Ascending aorta (tissue), 2 donors: ENCODE measurements at regions of chr19 and their contacts with region 1.

Region 1: DNA sequence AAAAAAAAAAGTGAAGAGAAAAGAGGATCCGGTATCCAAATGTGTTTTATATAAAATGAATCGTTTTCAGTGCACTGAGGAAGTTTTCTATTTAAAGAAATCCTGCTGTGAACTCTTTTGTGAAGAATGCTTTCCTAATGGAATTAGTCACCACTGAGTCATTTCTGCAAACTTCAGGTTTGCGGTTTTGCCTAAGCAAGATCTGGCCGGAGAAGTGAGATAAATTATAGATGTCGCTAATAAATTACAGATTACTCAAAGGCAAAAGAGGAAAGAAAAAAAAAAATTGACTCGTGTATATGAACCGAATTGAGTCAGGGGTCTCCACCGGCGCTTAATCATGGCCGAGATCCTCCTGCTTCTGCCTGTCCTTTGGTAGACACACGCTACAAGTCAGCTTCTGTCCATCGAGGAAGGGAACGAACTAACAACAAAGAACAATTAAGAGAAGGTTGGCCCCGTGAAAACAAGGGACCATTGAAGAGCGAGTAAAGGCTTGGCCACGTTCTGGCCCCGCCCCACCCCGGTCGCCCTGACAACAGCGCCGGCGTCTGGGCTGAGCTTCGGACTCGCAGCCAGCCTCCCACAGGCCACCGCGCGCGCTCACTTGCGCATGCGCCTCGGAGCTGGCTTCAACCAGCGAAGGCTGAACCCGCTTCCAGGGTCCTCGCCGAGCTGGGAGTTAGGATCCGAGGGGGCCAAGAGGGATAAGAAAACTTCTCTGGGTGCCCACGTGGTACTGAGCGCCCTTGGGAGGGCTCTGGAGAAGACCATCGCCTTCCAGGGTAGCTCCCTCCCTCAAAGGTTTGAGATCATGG is 33.0 kb upstream of the MRI1 start:
- DNase-seq: peak; percentile 65 to 96
- H3K4me3 ChIP-seq: peak overlapping the region; percentile 50 to 70
- H3K27ac ChIP-seq: peak overlapping the region; percentile 88 to 95
- H3K4me1 ChIP-seq: peaks cover 3 to 39% of the 10 kb centered on the region in 2 donors
- H3K27me3 ChIP-seq: no peaks in the 10 kb centered on the region
- CTCF ChIP-seq: no peak

Region 2: DNA sequence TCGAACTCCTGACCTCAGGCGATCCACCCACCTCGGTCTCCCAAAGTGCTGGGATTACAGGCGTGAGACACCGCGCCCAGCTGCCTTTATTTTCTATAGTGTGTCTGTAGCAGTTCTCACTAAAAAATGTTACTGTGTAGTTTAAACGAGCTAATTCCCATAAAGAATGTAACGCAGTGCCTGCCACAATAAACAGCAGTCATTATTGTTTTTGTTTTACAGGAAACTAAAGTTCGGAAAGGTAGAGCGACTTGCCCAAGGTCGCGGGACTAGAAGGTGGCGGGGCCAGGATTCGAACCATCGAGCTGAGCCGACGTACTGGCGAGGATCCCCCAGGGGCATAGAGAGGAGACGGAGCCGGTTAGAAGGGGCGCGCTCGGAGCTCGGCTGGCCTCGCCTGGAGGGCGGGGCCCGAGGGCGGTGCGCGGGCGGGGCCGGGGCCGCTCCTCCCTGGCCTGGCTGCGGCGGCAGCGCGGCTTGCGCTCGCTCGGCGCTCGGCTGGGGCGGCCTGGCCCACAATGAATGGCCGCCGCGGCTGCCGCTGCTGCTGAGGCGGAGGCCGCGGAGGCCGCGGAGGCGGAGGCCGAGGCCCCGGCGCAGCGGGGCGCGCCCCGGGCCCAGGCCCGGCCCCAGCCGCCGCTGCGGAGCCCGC is 613.5 kb before region 1 on chr19 and contains the start of gene NACC1:
- intact Hi-C with region 1: loop called (anchors 5 kb)
- DNase-seq: peak; percentile 56 to 94
- H3K4me3 ChIP-seq: peak within 1 kb of the TSS; percentile 94 to 100
- H3K27ac ChIP-seq: peak within 1 kb of the TSS; percentile 57 to 61
- H3K4me1 ChIP-seq: peaks cover 5 to 29% of the 10 kb centered on the region in 2 donors
- H3K27me3 ChIP-seq: no peaks in the 10 kb centered on the region
- CTCF ChIP-seq: no peak
- total RNA-seq, gene NACC1: 35.5 TPM

Region 3: DNA sequence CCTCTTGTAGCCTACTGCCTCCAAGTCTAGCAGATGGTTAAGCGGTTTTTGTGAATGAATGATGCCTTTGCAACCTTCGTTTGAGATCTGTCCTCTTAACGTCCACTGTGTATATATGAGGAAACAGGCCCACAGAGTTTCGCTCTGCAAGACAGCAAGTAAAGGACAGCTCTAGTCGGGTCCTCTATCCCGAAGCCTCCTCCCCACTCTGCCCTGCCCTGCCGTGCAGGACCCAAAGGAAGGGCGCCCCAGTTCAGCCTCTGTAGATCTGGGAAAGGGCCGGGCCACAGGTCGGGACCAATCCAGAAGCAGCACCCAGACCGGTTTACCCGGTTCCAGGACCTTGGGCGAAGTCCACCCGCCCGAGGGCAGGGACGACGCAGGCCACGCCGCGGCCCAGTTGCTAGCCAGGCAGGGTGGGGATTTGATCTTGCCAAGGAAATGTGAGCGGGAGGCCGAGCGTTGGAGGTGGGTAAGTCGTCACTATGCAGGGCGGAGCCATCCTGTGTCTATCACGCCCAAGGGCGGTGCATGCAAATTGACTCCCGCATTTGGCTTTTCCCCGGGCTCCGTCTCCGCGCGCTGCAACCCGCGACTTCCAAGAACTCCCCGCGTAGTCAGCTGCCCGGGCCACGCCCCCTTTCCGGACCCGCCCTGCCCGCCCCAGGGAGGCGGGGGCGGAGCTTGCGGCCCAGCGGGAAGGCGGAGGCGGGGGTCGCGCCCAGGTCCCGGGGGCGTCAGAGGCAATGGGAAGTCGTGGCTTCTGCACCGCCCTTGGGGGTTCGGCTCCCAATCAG is 568.6 kb before region 1 on chr19:
- intact Hi-C with region 1: loop called (anchors 5 kb)
- DNase-seq: peak; percentile 91 to 99
- H3K4me3 ChIP-seq: peak overlapping the region; percentile 49 to 58
- H3K27ac ChIP-seq: peak overlapping the region; percentile 95 to 96
- H3K4me1 ChIP-seq: peaks cover 11 to 38% of the 10 kb centered on the region in 2 donors
- H3K27me3 ChIP-seq: no peaks in the 10 kb centered on the region
- CTCF ChIP-seq: no peak

Region 4: GRCh38 chr19:13774217-13775191 is 43.1 kb after region 1 on chr19 and contains the start of gene C19orf53:
- intact Hi-C with region 1: loop called (anchors 5 kb)
- DNase-seq: peak; percentile 55 to 93
- H3K4me3 ChIP-seq: peak within 1 kb of the TSS; percentile 64 to 88
- H3K27ac ChIP-seq: peak within 1 kb of the TSS; percentile 86 to 88
- H3K4me1 ChIP-seq: peaks cover 0 to 24% of the 10 kb centered on the region in 2 donors
- H3K27me3 ChIP-seq: no peaks in the 10 kb centered on the region
- CTCF ChIP-seq: no peak
- total RNA-seq, gene C19orf53: 163 TPM